Psoas muscle (tissue), 8 donors: ENCODE measurements at regions of chr1 and their contacts with region 1.

Region 1: GRCh38 chr1:205168291-205168690 is 43.2 kb downstream of the DSTYK start:
- DNase-seq: no peak
- ATAC-seq: no peak
- H3K4me3 ChIP-seq: no peak overlapping the region
- H3K27ac ChIP-seq: peak overlapping the region; percentile 71
- H3K4me1 ChIP-seq: peaks cover 50% of the 10 kb centered on the region
- H3K27me3 ChIP-seq: no peaks in the 10 kb centered on the region
- CTCF ChIP-seq: no peak

Region 2: GRCh38 chr1:205141236-205142101 is 26.8 kb before region 1 on chr1:
- intact Hi-C with region 1: no loop called
- DNase-seq: peak; percentile 58 to 80
- ATAC-seq: peak; percentile 75 to 90 (median 84)
- H3K4me3 ChIP-seq: peak overlapping the region; percentile 20
- H3K27ac ChIP-seq: no peak overlapping the region
- H3K4me1 ChIP-seq: peaks cover 15% of the 10 kb centered on the region
- H3K27me3 ChIP-seq: no peaks in the 10 kb centered on the region
- CTCF ChIP-seq: peak; percentile 81

Region 3: DNA sequence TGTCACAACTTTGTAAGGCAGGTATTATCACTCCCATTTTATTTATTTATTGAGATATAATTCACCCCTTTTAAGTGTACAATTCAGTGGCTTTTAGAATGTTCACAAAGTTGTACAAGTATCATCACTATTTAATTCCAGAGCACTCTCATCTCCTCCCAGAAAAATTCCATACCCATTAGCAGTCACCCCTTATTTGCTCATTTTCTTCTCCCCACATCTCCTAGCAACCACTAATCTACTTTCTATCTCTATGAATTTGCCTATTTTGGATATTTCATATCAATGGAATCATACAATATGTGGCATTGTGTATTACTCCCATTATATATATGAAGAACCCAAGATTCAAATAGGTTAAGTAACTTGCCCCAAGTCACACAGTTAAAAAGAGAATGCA is 36.3 kb after region 1 on chr1:
- intact Hi-C with region 1: loop called in 1 of 2 experiments (anchors 5 kb)
- DNase-seq: no peak
- ATAC-seq: no peak
- H3K4me3 ChIP-seq: no peak overlapping the region
- H3K27ac ChIP-seq: peak overlapping the region; percentile 65
- H3K4me1 ChIP-seq: peaks cover 56% of the 10 kb centered on the region
- H3K27me3 ChIP-seq: no peaks in the 10 kb centered on the region
- CTCF ChIP-seq: no peak

Region 4: GRCh38 chr1:205375835-205376545 is 207.7 kb after region 1 on chr1:
- intact Hi-C with region 1: no loop called
- DNase-seq: no peak
- ATAC-seq: peak in 1 of 4 donors; percentile 60
- H3K4me3 ChIP-seq: no peak overlapping the region
- H3K27ac ChIP-seq: no peak overlapping the region
- H3K4me1 ChIP-seq: no peaks in the 10 kb centered on the region
- H3K27me3 ChIP-seq: peaks cover 0 to 50% (median 5%) of the 10 kb centered on the region in 3 donors
- CTCF ChIP-seq: no peak